ENCODE measurements at regions of chr9 and their contacts with region 1.

Region 1: GRCh38 chr9:136023410-136024225 is 62.4 kb upstream of the UBAC1 start:
- DNase-seq: no peak
- ATAC-seq: no peak
- H3K4me3 ChIP-seq: no peak overlapping the region
- H3K27ac ChIP-seq: no peak overlapping the region; the same call in 2 of the 3 replicates
- H3K4me1 ChIP-seq: peaks cover 0 to 28% of the 10 kb centered on the region in 2 experiments; a peak in 2 of 5 replicates
- H3K27me3 ChIP-seq: no peaks in the 10 kb centered on the region
- CTCF ChIP-seq: no peak
- EP300 ChIP-seq: no peak
- POLR2A ChIP-seq: no peak
- RAD21 ChIP-seq: no peak

Region 2: GRCh38 chr9:135898634-135899407 is 124.8 kb before region 1 on chr9:
- CTCF ChIA-PET with region 1: no interaction called
- POLR2A ChIA-PET with region 1: no interaction called
- in situ Hi-C with region 1: no loop called
- intact Hi-C with region 1: no loop called
- DNase-seq: no peak
- ATAC-seq: no peak
- H3K4me3 ChIP-seq: no peak overlapping the region
- H3K27ac ChIP-seq: no peak overlapping the region
- H3K4me1 ChIP-seq: peaks cover 12 to 13% of the 10 kb centered on the region in 2 experiments; a peak in 4 of 5 replicates
- H3K27me3 ChIP-seq: no peaks in the 10 kb centered on the region
- CTCF ChIP-seq: no peak
- EP300 ChIP-seq: no peak
- POLR2A ChIP-seq: no peak
- RAD21 ChIP-seq: no peak

Region 3: GRCh38 chr9:136059321-136060233 is 36.0 kb after region 1 on chr9:
- CTCF ChIA-PET with region 1: no interaction called
- POLR2A ChIA-PET with region 1: interaction called, 3 read pairs
- in situ Hi-C with region 1: loop called (anchors 5 kb)
- intact Hi-C with region 1: no loop called
- DNase-seq: no peak
- ATAC-seq: no peak
- H3K4me3 ChIP-seq: no peak overlapping the region
- H3K27ac ChIP-seq: no peak overlapping the region
- H3K4me1 ChIP-seq: peaks cover 0 to 62% of the 10 kb centered on the region in 2 experiments; a peak in 2 of 5 replicates
- H3K27me3 ChIP-seq: no peaks in the 10 kb centered on the region
- CTCF ChIP-seq: no peak
- EP300 ChIP-seq: no peak
- POLR2A ChIP-seq: no peak
- RAD21 ChIP-seq: no peak

Measured in K562 (cell line).